K562 (cell line): ENCODE measurements at regions of chr1 and their contacts with region 1.

Region 1: GRCh38 chr1:164786980-164787833 is 228.2 kb downstream of the PBX1 start:
- DNase-seq: peak; percentile 82 to 90 (median 89)
- ATAC-seq: peak; percentile 99
- H3K4me3 ChIP-seq: no peak overlapping the region
- H3K27ac ChIP-seq: no peak overlapping the region
- H3K4me1 ChIP-seq: no peaks in the 10 kb centered on the region
- H3K27me3 ChIP-seq: peaks cover 5 to 13% of the 10 kb centered on the region in 2 experiments; a peak in 3 of 5 replicates
- CTCF ChIP-seq: peak; percentile 90 to 95 (median 94)
- EP300 ChIP-seq: no peak; the same call in 1 of the 2 replicates
- POLR2A ChIP-seq: no peak
- RAD21 ChIP-seq: peak; percentile 94 to 95

Region 2: DNA sequence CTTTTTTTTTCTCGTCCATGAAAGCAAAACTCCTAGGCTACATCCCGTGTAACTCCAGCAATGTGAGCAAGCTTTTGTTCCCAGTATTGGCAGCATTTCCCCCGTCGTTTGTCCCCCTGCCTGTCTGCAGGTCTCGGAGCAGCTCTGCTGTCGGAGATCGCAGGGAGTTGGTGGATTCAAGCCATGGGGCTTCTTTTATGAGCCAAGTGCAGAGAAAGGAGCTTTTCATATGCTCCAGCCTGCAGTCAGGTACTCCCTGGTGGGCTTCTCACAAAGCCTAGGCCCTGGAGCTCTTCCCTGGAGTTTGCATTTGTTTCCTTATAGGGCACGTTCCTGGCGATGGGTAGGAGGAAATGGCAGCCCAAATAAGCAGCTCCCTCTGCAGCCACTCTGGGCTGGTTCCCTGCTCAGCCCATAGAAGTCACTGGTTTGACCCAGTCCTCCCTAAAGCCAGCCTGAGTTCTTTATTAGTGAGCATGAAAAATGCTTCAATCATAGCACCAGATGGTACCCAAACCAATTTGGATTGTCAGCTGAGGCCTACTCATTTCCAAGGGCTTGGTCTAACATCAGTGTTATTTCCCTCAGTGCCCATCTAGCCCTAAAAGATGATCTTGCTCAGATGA is 1387.1 kb before region 1 on chr1:
- CTCF ChIA-PET with region 1: no interaction called
- POLR2A ChIA-PET with region 1: no interaction called
- in situ Hi-C with region 1: loop called (anchors 10 kb)
- intact Hi-C with region 1: no loop called
- DNase-seq: no peak
- ATAC-seq: no peak
- H3K4me3 ChIP-seq: no peak overlapping the region
- H3K27ac ChIP-seq: no peak overlapping the region
- H3K4me1 ChIP-seq: no peaks in the 10 kb centered on the region
- H3K27me3 ChIP-seq: no peaks in the 10 kb centered on the region
- CTCF ChIP-seq: no peak
- EP300 ChIP-seq: no peak
- POLR2A ChIP-seq: no peak
- RAD21 ChIP-seq: no peak

Region 3: DNA sequence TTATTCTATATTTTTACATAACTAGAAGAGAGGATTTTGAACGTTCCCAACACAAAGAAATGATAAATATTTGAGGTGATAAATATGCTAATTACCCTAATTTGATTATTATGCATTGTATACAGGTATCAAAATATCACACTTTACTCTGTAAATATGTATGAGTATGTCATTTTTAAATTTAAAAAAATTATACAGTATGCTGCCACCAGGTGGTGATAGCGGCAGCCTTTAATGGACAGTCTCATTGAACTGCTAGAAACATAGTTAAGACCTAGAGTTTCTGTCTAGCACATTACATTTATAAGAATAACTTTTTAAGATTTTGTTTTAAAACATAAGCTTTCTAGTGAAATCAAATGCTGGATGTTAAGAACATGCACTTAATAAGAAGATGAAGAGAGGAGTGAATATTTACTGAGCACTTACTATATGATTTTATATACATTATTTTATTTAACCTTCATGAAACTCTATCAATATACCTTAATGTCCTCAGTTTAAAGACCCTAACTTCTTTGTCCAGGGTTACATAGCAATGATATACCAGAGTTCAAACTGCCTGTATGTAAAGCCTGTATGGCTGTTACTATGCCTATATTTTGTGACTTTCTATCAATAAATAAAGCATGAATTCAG is 1258.4 kb before region 1 on chr1:
- CTCF ChIA-PET with region 1: no interaction called
- POLR2A ChIA-PET with region 1: no interaction called
- in situ Hi-C with region 1: no loop called
- intact Hi-C with region 1: loop called (anchors 5 kb)
- DNase-seq: peak; percentile 13 to 37 (median 30)
- ATAC-seq: peak; percentile 78
- H3K4me3 ChIP-seq: no peak overlapping the region
- H3K27ac ChIP-seq: no peak overlapping the region
- H3K4me1 ChIP-seq: no peaks in the 10 kb centered on the region
- H3K27me3 ChIP-seq: no peaks in the 10 kb centered on the region
- CTCF ChIP-seq: peak; percentile 22 to 53 (median 28); a peak in 3 of 6 replicates
- EP300 ChIP-seq: no peak
- POLR2A ChIP-seq: no peak
- RAD21 ChIP-seq: peak; percentile 44 to 57

Region 4: DNA sequence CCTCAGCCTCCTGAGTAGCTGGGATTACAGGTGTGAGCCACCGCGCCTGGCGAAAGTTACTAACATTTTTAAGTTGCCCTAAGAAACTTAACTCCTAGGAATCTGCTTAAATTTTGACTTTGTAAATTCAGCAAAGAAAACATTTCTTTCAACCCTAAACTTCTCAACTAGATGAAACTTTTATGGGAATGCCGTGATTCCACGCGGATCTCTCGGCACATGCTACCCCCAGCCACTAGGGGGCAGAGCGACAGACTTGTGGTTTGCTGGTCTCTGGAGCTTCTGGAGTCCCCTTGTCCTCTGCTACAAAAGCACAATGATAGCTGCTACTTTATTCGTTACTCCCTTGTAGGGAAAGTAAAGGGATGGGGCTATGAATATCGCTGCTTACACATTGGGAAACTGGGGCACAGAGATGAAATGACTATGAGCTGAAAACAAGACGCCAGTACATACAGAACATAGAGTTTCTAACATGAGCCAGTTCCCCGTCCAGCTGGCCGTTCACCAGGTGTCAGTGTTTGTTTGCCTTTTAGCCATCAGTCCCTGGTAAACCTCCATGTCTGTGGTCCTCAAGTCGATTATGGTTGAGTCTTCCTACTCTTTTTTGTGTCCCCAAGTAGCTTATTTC is 113.5 kb before region 1 on chr1:
- CTCF ChIA-PET with region 1: interaction called, 22 read pairs
- POLR2A ChIA-PET with region 1: interaction called, 3 read pairs
- in situ Hi-C with region 1: no loop called
- intact Hi-C with region 1: loop called (anchors 1 kb)
- DNase-seq: peak; percentile 68 to 81 (median 76)
- ATAC-seq: peak; percentile 89
- H3K4me3 ChIP-seq: no peak overlapping the region
- H3K27ac ChIP-seq: no peak overlapping the region
- H3K4me1 ChIP-seq: no peaks in the 10 kb centered on the region; a peak in 2 of 5 replicates
- H3K27me3 ChIP-seq: peaks cover 0 to 2% of the 10 kb centered on the region in 2 experiments; a peak in 2 of 5 replicates
- CTCF ChIP-seq: peak; percentile 63 to 93 (median 73)
- EP300 ChIP-seq: no peak
- POLR2A ChIP-seq: no peak
- RAD21 ChIP-seq: peak; percentile 55 to 63

Region 5: GRCh38 chr1:165073185-165074007 is 286.2 kb after region 1 on chr1:
- CTCF ChIA-PET with region 1: no interaction called
- POLR2A ChIA-PET with region 1: no interaction called
- in situ Hi-C with region 1: no loop called
- intact Hi-C with region 1: loop called (anchors 5 kb)
- DNase-seq: peak in 3 of 4 experiments; percentile 23 to 57 (median 49)
- ATAC-seq: peak; percentile 88
- H3K4me3 ChIP-seq: no peak overlapping the region
- H3K27ac ChIP-seq: no peak overlapping the region
- H3K4me1 ChIP-seq: no peaks in the 10 kb centered on the region
- H3K27me3 ChIP-seq: no peaks in the 10 kb centered on the region
- CTCF ChIP-seq: peak; percentile 60 to 70 (median 61)
- EP300 ChIP-seq: no peak
- POLR2A ChIP-seq: no peak
- RAD21 ChIP-seq: peak; percentile 72 to 78